HEK293 (cell line): ENCODE measurements at regions of chr12 and their contacts with region 1.

Region 1: DNA sequence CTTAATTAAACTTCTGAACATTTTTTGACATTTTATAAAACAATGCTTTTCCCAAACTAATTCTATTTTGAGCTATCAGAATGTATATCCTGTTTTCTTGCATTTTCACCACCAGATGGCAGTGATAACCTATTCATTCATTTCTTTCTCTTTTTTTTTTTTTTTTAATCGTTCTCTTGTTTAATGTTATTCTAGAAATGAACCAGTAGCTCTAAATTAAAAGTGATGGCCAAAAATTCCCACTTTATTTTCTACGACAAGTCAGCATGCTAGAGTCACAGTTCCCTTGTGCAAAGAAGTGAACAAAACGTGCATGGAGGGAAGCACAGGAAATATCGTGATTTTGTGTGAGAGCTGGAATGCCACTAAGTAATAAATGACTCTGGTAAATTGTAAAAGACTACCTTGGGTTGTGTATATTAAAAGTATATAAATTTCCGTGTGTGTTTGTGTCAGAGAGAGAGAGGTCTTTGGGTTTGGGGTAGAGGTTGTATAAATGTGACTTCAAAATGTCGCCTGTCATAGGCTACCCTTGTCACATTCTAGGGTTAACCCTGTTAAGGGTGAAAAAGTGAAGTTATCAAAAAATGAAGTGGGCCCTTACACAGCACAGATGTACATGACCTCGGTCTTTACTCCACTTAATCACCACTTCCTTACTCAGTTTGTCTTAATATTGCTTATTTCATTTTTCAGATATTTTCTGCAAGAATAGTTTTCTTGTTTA is 40.4 kb upstream of the LDHB start:
- H3K4me3 ChIP-seq: no peak overlapping the region
- H3K27ac ChIP-seq: no peak overlapping the region
- H3K4me1 ChIP-seq: no peaks in the 10 kb centered on the region
- CTCF ChIP-seq: peak; percentile 45; the same call in 1 of the 2 replicates

Region 2: GRCh38 chr12:21989819-21990412 is 291.8 kb after region 1 on chr12:
- CTCF ChIA-PET with region 1: interaction called, 55 read pairs
- POLR2A ChIA-PET with region 1: no interaction called
- H3K4me3 ChIP-seq: no peak overlapping the region
- H3K27ac ChIP-seq: no peak overlapping the region
- H3K4me1 ChIP-seq: no peaks in the 10 kb centered on the region
- CTCF ChIP-seq: no peak

Region 3: GRCh38 chr12:22018860-22019259 is 320.8 kb after region 1 on chr12:
- CTCF ChIA-PET with region 1: interaction called, 11 read pairs
- POLR2A ChIA-PET with region 1: no interaction called
- H3K4me3 ChIP-seq: no peak overlapping the region
- H3K27ac ChIP-seq: no peak overlapping the region
- H3K4me1 ChIP-seq: no peaks in the 10 kb centered on the region
- CTCF ChIP-seq: no peak

Region 4: GRCh38 chr12:22443379-22444316 is 745.6 kb after region 1 on chr12:
- CTCF ChIA-PET with region 1: interaction called, 14 read pairs
- POLR2A ChIA-PET with region 1: no interaction called
- H3K4me3 ChIP-seq: no peak overlapping the region
- H3K27ac ChIP-seq: no peak overlapping the region
- H3K4me1 ChIP-seq: no peaks in the 10 kb centered on the region
- CTCF ChIP-seq: peak; percentile 65